K562 (cell line): ENCODE measurements at regions of chr11 and their contacts with region 1.

Region 1: DNA sequence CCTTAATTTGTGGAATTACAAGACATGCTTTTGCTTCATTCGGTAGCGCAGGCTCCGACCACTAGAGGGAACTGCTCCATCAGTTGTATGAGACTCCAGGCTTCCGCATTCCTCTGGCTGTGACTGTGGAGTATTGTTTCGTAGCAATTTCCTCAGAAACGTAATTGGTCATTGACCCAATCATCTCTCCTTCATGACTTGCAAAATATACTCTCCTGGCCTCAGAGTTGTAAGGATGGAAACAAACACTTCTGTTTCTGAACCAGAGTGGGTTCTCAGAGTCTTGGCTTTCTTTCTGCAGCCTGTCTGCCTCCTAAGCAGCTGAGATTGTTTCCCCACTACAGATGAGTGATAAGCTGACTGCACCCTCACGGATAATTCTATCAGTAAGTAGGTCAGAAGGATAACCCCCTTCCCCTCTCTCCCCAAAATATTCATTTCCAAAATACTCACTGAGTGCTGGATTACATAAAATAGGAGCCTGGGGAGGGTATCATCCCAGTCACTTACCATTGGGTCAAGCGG is 146.8 kb upstream of the ZC3H12C start:
- DNase-seq: peak; percentile 59 to 87 (median 66)
- ATAC-seq: peak; percentile 99
- H3K4me3 ChIP-seq: no peak overlapping the region
- H3K27ac ChIP-seq: peak overlapping the region; percentile 43; the same call in 2 of the 3 replicates
- H3K4me1 ChIP-seq: no peaks in the 10 kb centered on the region; a peak in 1 of 5 replicates
- H3K27me3 ChIP-seq: no peaks in the 10 kb centered on the region
- CTCF ChIP-seq: peak; percentile 80 to 94 (median 90)
- EP300 ChIP-seq: peak; percentile 51
- POLR2A ChIP-seq: no peak
- RAD21 ChIP-seq: peak; percentile 95 to 96

Region 2: DNA sequence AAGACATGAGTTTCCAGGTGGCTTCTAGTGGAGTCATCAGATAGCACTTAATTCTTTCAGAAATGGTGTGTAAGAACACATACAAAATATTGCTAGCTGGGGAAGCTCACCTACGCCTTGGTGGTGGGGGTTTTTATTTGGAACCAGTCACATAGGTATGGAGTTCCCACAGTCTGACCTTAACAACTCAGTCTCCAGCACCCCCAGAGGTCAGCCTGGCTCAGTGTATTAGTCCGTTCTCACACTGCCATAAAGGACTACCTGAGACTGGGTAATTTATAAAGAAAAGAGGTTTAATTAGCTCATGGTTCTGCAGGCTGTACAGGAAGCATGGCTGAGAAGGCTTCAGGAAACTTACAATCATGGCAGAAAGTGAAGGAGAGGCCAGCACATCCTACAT is 170.7 kb before region 1 on chr11:
- CTCF ChIA-PET with region 1: no interaction called
- POLR2A ChIA-PET with region 1: no interaction called
- in situ Hi-C with region 1: no loop called
- intact Hi-C with region 1: no loop called
- DNase-seq: no peak
- ATAC-seq: peak; percentile 49; the same call in 2 of the 3 replicates
- H3K4me3 ChIP-seq: no peak overlapping the region
- H3K27ac ChIP-seq: no peak overlapping the region
- H3K4me1 ChIP-seq: no peaks in the 10 kb centered on the region
- H3K27me3 ChIP-seq: no peaks in the 10 kb centered on the region
- CTCF ChIP-seq: no peak
- EP300 ChIP-seq: no peak
- POLR2A ChIP-seq: no peak
- RAD21 ChIP-seq: 0 out of 4 replicates have a peak, but pooled peaks of 1 of the 2 experiments have one; percentile 12

Region 3: DNA sequence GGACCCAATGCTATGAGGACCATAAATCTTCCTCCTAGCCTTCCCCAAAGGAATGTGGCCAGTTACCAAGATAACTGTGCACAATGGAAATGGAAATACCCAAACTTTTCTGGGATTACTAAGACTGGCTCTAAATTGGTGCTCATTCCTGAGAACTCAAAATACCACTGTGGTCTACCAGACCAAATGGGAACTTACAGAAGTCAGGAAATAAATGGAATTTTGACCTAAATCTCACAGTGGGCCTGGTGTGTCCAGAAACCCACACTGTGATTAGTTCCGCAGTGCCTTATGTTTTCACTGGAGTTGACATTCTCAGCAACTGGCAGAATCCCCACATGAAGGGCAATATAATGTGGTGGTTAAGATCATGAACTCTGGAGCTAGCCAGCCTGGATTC is 47.4 kb after region 1 on chr11:
- CTCF ChIA-PET with region 1: no interaction called
- POLR2A ChIA-PET with region 1: no interaction called
- in situ Hi-C with region 1: no loop called
- intact Hi-C with region 1: loop called (anchors 5 kb)
- DNase-seq: no peak
- ATAC-seq: no peak
- H3K4me3 ChIP-seq: no peak overlapping the region
- H3K27ac ChIP-seq: no peak overlapping the region
- H3K4me1 ChIP-seq: no peaks in the 10 kb centered on the region
- H3K27me3 ChIP-seq: no peaks in the 10 kb centered on the region
- CTCF ChIP-seq: no peak
- EP300 ChIP-seq: no peak
- POLR2A ChIP-seq: no peak
- RAD21 ChIP-seq: no peak

Region 4: DNA sequence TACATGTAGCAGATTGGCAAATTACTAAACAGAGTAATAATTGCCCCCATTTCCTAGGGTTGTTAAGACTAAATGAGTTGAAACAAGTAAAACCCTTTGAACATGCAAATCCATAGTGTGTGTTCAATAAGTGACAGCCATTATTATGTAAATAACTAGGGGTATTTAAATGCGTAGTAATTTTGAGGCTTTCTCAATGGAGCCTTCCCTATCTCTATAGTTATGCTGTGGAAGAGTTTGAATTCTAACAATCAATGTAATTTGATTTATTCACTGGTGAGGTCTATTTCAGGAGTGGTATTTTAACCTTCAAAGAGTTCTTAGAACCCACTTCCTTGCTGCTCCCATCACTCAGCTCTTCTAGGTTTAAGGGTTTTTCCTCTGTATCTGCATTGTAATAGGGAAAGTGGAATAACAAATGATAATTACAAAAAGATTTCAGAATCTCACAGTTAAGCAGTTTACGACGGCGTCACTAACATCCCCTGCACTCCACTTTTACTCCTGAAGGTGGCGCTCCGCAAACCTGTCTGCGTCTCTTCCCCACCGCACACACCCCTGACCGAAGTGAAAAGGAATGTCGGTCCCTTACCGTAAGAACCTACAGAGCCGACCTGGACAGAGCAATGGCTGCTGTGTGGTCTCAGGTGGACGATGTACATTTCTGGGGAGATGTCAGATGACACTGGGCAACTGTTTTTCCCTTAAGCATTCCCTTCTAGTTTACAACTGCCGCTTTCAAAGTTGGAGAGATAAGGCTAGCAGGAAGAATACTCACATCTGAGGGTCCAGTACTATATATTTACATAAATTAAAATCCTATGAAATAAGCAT is 227.6 kb after region 1 on chr11:
- CTCF ChIA-PET with region 1: no interaction called
- POLR2A ChIA-PET with region 1: interaction called, 4 read pairs
- in situ Hi-C with region 1: no loop called
- intact Hi-C with region 1: loop called (anchors 5 kb)
- DNase-seq: peak; percentile 72 to 79 (median 75)
- ATAC-seq: peak; percentile 95
- H3K4me3 ChIP-seq: no peak overlapping the region
- H3K27ac ChIP-seq: no peak overlapping the region
- H3K4me1 ChIP-seq: no peaks in the 10 kb centered on the region; a peak in 1 of 5 replicates
- H3K27me3 ChIP-seq: no peaks in the 10 kb centered on the region
- CTCF ChIP-seq: peak; percentile 81 to 92 (median 81)
- EP300 ChIP-seq: no peak
- POLR2A ChIP-seq: no peak
- RAD21 ChIP-seq: peak; percentile 40 to 57